AG04450 (cell line): ENCODE measurements at regions of chr11 and their contacts with region 1.

Region 1: DNA sequence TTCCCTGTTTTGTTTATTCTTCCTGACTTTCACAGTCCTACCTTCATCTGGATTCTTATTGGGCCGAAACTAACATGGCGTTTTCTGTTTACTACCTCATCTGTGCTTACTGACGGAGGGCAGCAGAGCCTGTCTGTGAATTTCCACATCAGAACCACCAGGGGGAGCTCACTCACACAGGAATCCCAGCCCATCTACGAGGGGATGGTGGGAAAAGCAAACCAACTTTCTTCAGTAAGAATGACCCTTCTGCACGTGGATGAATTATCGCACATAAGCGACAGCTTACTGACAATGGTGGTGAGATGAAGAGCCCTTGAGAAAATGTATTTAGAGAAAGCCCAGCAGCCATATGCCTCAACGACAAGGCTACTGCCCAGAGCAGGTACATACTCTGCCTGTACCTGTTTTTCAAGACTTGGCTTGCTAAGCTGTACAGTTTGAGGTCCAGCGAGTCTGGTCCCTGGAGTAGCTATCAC is 42.5 kb downstream of the LARGE2 start:
- DNase-seq: peak; percentile 66
- H3K4me3 ChIP-seq: no peak overlapping the region
- H3K27ac ChIP-seq: no peak overlapping the region
- H3K27me3 ChIP-seq: no peaks in the 10 kb centered on the region
- CTCF ChIP-seq: peak; percentile 91

Region 2: GRCh38 chr11:45444796-45445195 is 520.2 kb before region 1 on chr11:
- CTCF ChIA-PET with region 1: no interaction called
- POLR2A ChIA-PET with region 1: no interaction called
- DNase-seq: no peak
- H3K4me3 ChIP-seq: no peak overlapping the region
- H3K27ac ChIP-seq: no peak overlapping the region
- H3K27me3 ChIP-seq: peaks cover 8% of the 10 kb centered on the region
- CTCF ChIP-seq: no peak

Region 3: DNA sequence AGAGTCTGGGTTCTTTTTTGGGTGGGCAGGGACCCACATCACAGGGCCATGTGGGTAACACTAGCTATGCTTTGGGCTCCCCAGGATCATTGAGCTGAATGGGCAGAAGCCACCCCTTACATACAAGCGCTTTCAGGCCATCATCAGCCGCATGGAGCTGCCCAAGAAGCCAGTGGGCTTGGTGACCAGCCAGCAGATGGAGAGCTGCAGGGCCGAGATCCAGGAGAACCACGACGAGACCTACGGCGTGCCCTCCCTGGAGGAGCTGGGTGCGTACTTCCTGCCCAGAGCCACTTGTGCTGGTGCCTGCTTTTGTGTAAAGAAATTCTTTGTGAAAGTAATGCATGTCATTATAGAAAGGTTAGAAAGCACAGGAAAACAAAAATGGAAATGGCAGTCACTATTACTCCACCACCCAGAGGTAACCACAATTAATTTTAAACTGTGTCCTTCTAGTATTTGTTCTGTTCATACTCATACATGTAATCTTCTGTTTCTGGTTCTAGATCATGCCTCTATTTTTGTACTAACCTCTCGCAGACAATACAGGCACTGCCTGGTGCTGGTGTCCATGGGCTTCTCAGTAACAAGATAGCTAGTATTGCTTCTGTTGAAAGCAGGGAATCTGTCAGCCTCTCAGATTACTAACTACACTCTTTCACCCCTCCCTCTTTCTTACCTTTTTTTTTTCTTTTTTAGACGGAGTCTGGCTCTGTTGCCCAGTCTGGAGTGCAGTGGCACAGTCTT is 104.0 kb before region 1 on chr11:
- CTCF ChIA-PET with region 1: no interaction called
- POLR2A ChIA-PET with region 1: no interaction called
- DNase-seq: no peak
- H3K4me3 ChIP-seq: no peak overlapping the region
- H3K27ac ChIP-seq: peak overlapping the region; percentile 95
- H3K27me3 ChIP-seq: no peaks in the 10 kb centered on the region
- CTCF ChIP-seq: no peak

Region 4: DNA sequence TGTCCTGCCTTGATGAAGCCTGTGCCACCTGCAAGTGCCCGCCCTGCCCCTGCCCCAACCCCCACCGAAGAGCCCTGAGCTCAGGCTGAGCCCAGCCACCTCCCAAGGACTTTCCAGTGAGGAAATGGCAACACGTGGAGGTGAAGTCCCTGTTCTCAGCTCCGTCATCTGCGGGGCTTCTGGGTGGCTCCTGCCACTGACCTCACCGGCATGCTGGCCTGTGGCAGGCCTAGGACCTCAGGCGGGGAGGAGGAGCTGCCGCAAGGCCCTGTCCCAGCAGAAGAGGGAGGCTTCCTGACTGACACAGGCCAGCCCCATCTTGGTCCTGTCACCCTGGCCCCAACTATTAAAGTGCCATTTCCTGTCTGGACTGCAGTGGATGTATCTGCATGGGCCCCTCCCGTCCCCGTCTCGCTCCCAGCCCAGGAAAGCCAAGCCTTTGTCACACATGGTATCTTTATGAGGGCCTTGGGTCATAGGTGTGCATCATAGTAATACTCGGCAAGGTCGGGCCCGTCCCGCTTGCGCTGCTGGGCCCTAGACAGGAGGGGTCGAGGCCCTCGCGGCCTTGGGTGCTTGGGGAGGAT is 58.8 kb before region 1 on chr11:
- CTCF ChIA-PET with region 1: no interaction called
- POLR2A ChIA-PET with region 1: no interaction called
- DNase-seq: no peak
- H3K4me3 ChIP-seq: no peak overlapping the region
- H3K27ac ChIP-seq: no peak overlapping the region
- H3K27me3 ChIP-seq: no peaks in the 10 kb centered on the region
- CTCF ChIP-seq: no peak

Region 5: DNA sequence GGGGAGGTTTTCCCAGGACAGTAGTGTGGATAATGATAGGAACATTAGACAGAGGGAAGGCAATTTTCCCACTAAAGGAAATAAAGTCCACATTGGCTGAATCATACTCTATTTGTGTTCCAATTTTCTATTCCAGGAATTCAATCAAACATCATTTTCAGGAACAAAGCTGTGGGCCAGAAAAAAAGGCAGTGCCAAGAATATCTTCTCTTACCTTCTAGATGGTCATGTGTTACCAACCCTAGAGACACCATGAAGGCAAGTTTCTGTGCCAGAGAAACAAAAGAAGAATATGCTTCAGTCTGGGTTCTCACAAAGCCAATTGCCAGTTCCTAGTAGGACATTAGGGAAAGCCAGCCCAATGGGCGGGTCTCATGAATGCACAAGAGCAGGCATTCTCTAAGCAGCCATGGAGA is 14.9 kb before region 1 on chr11:
- CTCF ChIA-PET with region 1: interaction called, 36 read pairs
- POLR2A ChIA-PET with region 1: no interaction called
- DNase-seq: no peak
- H3K4me3 ChIP-seq: no peak overlapping the region
- H3K27ac ChIP-seq: no peak overlapping the region
- H3K27me3 ChIP-seq: no peaks in the 10 kb centered on the region
- CTCF ChIP-seq: no peak

Region 6: GRCh38 chr11:45993531-45994001 is 28.6 kb after region 1 on chr11:
- CTCF ChIA-PET with region 1: interaction called, 49 read pairs
- POLR2A ChIA-PET with region 1: no interaction called
- DNase-seq: no peak
- H3K4me3 ChIP-seq: no peak overlapping the region
- H3K27ac ChIP-seq: no peak overlapping the region
- H3K27me3 ChIP-seq: no peaks in the 10 kb centered on the region
- CTCF ChIP-seq: no peak

Region 7: DNA sequence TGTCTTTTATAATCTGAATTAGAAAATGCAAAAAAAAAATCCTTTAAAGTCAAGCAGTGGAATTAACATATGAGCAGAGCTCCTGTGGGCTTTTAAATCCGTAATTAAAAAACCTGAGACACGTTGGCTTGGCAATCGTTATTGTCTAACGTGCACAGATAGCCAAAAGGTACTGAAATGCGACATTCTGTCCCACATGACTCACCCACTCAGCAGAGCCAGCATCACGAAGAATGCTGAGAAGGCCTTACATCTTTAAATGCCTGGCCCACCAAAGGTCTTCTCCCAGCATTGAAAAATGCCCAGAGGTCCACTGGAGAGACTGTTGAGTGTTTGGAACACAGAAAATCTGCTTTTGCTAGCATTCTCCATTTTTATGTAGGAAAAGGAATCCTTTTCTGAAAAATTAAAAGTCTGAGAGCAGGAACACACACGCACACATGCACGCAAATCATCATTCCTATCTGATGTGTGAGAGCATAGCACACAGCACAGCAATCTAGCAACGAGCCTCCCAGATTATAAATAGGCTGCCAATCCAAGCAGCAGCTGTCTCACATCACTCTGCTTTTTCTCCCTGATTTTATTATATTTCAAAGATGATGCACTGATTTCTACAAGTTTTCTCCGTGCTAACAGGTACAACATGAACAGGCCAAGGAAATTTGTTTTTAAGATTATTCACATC is 61.8 kb after region 1 on chr11:
- CTCF ChIA-PET with region 1: interaction called, 10 read pairs
- POLR2A ChIA-PET with region 1: no interaction called
- DNase-seq: no peak
- H3K4me3 ChIP-seq: no peak overlapping the region
- H3K27ac ChIP-seq: peak overlapping the region; percentile 86
- H3K27me3 ChIP-seq: no peaks in the 10 kb centered on the region
- CTCF ChIP-seq: no peak

Region 8: GRCh38 chr11:46114961-46115360 is 150.0 kb after region 1 on chr11:
- CTCF ChIA-PET with region 1: interaction called, 12 read pairs
- POLR2A ChIA-PET with region 1: no interaction called
- DNase-seq: no peak
- H3K4me3 ChIP-seq: no peak overlapping the region
- H3K27ac ChIP-seq: no peak overlapping the region
- H3K27me3 ChIP-seq: no peaks in the 10 kb centered on the region
- CTCF ChIP-seq: no peak

Region 9: GRCh38 chr11:46308631-46309419 is 343.9 kb after region 1 on chr11:
- CTCF ChIA-PET with region 1: interaction called, 13 read pairs
- POLR2A ChIA-PET with region 1: no interaction called
- DNase-seq: no peak
- H3K4me3 ChIP-seq: no peak overlapping the region
- H3K27ac ChIP-seq: peak overlapping the region; percentile 47
- H3K27me3 ChIP-seq: no peaks in the 10 kb centered on the region
- CTCF ChIP-seq: peak; percentile 87